A673 (cell line): ENCODE measurements at regions of chr7 and their contacts with region 1.

Region 1: GRCh38 chr7:22488643-22489462 is 11.1 kb downstream of the STEAP1B start:
- DNase-seq: peak; percentile 86
- H3K4me3 ChIP-seq: no peak overlapping the region
- H3K27ac ChIP-seq: no peak overlapping the region
- H3K4me1 ChIP-seq: peaks cover 3% of the 10 kb centered on the region
- H3K27me3 ChIP-seq: no peaks in the 10 kb centered on the region
- CTCF ChIP-seq: peak; percentile 92

Region 2: GRCh38 chr7:22103255-22103969 is 385.4 kb before region 1 on chr7:
- CTCF ChIA-PET with region 1: no interaction called
- POLR2A ChIA-PET with region 1: no interaction called
- intact Hi-C with region 1: loop called (anchors 2 kb)
- DNase-seq: peak; percentile 91
- H3K4me3 ChIP-seq: no peak overlapping the region
- H3K27ac ChIP-seq: no peak overlapping the region
- H3K4me1 ChIP-seq: peaks cover 6% of the 10 kb centered on the region
- H3K27me3 ChIP-seq: no peaks in the 10 kb centered on the region
- CTCF ChIP-seq: peak; percentile 86